Caco-2 (cell line): ENCODE measurements at regions of chr12 and their contacts with region 1.

Region 1: GRCh38 chr12:42144408-42145196 is at the start of gene GXYLT1:
- DNase-seq: peak; percentile 97 to 98
- H3K4me3 ChIP-seq: peak within 1 kb of the TSS; percentile 69
- H3K4me3 Mint-ChIP-seq: peak within 1 kb of the TSS; percentile 82
- H3K27ac Mint-ChIP-seq: peak within 1 kb of the TSS; percentile 84
- H3K4me1 ChIP-seq: peaks cover 31% of the 10 kb centered on the region
- H3K4me1 Mint-ChIP-seq: peaks cover 35% of the 10 kb centered on the region
- H3K27me3 ChIP-seq: no peaks in the 10 kb centered on the region
- H3K27me3 Mint-ChIP-seq: no peaks in the 10 kb centered on the region
- CTCF ChIP-seq: no peak
- total RNA-seq, gene GXYLT1: 25.7 and 28.1 TPM in 2 replicates

Region 2: GRCh38 chr12:42396473-42397259 is 252.1 kb after region 1 on chr12:
- CTCF ChIA-PET with region 1: no interaction called
- POLR2A ChIA-PET with region 1: no interaction called
- intact Hi-C with region 1: no loop called
- DNase-seq: no peak
- H3K4me3 ChIP-seq: no peak overlapping the region
- H3K4me3 Mint-ChIP-seq: no peak overlapping the region
- H3K27ac Mint-ChIP-seq: no peak overlapping the region
- H3K4me1 ChIP-seq: no peaks in the 10 kb centered on the region
- H3K4me1 Mint-ChIP-seq: no peaks in the 10 kb centered on the region
- H3K27me3 ChIP-seq: no peaks in the 10 kb centered on the region
- H3K27me3 Mint-ChIP-seq: no peaks in the 10 kb centered on the region
- CTCF ChIP-seq: no peak

Region 3: DNA sequence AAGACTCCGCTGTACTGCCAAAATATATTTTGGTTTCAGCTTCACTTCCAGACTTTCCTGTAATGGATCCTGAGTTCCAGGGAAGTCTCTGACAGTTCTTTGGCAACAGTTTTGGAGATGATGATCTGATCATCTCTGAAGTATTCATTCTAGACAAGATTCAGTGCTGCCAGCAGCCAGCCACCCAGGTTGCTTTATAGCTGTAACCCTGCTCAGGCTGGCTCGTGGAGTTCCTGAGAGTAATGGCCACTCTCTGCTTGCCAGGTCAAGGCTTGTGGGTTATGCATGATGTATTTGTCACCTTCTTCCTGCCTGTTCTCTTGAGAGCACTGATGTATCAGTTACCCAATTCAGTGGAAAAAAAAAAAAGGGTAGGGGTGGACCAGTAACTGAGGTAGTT is 305.6 kb after region 1 on chr12:
- CTCF ChIA-PET with region 1: no interaction called
- POLR2A ChIA-PET with region 1: no interaction called
- intact Hi-C with region 1: loop called (anchors 10 kb)
- DNase-seq: no peak
- H3K4me3 ChIP-seq: no peak overlapping the region
- H3K4me3 Mint-ChIP-seq: no peak overlapping the region
- H3K27ac Mint-ChIP-seq: no peak overlapping the region
- H3K4me1 ChIP-seq: peaks cover 10% of the 10 kb centered on the region; the same call in 1 of the 2 replicates
- H3K4me1 Mint-ChIP-seq: no peaks in the 10 kb centered on the region
- H3K27me3 ChIP-seq: no peaks in the 10 kb centered on the region
- H3K27me3 Mint-ChIP-seq: no peaks in the 10 kb centered on the region
- CTCF ChIP-seq: no peak